AG04450 (cell line): ENCODE measurements at regions of chr2 and their contacts with region 1.

Region 1: DNA sequence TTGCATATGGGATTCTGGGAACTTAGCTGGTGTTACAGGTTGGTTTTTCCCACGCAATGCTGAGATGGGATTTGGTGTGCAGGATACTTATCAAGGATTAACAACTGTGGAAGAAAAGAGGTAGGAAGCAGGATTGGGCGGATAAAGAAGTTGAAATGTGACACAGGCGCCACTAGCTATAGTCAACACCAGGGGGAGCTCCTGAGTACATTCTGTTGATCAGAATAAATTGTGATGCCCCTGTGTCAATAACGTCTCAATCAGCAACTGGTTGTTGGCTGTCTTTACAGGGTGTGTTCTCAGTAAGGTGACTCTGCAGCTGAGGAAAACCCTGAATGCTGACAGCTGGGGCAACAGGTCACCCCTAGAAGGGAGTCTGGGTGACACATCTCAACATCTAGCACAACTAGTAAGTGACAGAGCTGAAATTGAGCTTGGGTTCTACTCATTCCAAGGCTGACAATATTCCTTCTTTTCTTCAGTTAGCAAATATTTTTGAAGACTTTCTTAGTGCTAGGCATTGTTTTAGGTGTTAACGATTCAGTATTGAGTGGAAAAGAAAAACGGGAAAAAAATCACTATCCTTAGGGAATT is 143.0 kb downstream of the ARL6IP6 start:
- DNase-seq: no peak
- H3K4me3 ChIP-seq: no peak overlapping the region
- H3K27ac ChIP-seq: no peak overlapping the region
- H3K27me3 ChIP-seq: no peaks in the 10 kb centered on the region
- CTCF ChIP-seq: peak; percentile 64

Region 2: GRCh38 chr2:152826581-152827279 is 34.7 kb before region 1 on chr2:
- CTCF ChIA-PET with region 1: interaction called, 10 read pairs
- POLR2A ChIA-PET with region 1: no interaction called
- DNase-seq: no peak
- H3K4me3 ChIP-seq: no peak overlapping the region
- H3K27ac ChIP-seq: no peak overlapping the region
- H3K27me3 ChIP-seq: no peaks in the 10 kb centered on the region
- CTCF ChIP-seq: no peak

Region 3: GRCh38 chr2:153090561-153090960 is 229.1 kb after region 1 on chr2:
- CTCF ChIA-PET with region 1: no interaction called
- POLR2A ChIA-PET with region 1: no interaction called
- DNase-seq: no peak
- H3K4me3 ChIP-seq: no peak overlapping the region
- H3K27ac ChIP-seq: no peak overlapping the region
- H3K27me3 ChIP-seq: no peaks in the 10 kb centered on the region
- CTCF ChIP-seq: no peak

Region 4: DNA sequence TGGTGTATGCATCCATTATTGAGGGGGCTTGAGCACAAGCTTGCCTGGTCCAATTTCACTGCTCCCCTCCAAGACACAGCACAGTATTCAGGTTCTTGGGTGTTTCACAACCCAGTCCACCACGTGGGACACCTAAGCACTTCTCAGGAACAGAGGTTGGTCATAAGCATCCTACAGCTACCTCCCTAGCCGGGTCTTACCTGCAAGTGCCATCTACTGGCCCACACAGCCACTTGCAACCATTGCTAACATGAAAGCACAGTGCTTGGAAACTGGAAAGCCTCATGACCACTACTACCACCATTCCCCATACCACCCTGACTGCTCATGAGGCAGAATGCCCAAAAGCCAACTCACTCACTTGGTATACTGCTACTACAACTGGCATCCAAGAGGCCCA is 722.8 kb after region 1 on chr2:
- CTCF ChIA-PET with region 1: no interaction called
- POLR2A ChIA-PET with region 1: no interaction called
- DNase-seq: no peak
- H3K4me3 ChIP-seq: no peak overlapping the region
- H3K27ac ChIP-seq: no peak overlapping the region
- H3K27me3 ChIP-seq: no peaks in the 10 kb centered on the region
- CTCF ChIP-seq: no peak